GM12878 (cell line): ENCODE measurements at regions of chr6 and their contacts with region 1.

Region 1: GRCh38 chr6:36678518-36679027 is at the start of gene CDKN1A:
- DNase-seq: no peak
- ATAC-seq: peak; percentile 75
- H3K4me3 ChIP-seq: peak within 1 kb of the TSS; percentile 75
- H3K27ac ChIP-seq: peak within 1 kb of the TSS; percentile 88
- H3K4me1 ChIP-seq: peaks cover 44% of the 10 kb centered on the region
- H3K27me3 ChIP-seq: no peaks in the 10 kb centered on the region
- CTCF ChIP-seq: no peak
- EP300 ChIP-seq: 0 out of 4 replicates have a peak, but pooled peaks of 1 of the 2 experiments have one; percentile 38
- POLR2A ChIP-seq: peak; percentile 95
- RAD21 ChIP-seq: no peak
- polyA plus RNA-seq, gene CDKN1A: 25.2 to 48.4 TPM

Region 2: GRCh38 chr6:36442671-36443470 is 235.7 kb before region 1 on chr6 and contains the starts of genes KCTD20 and PXT1:
- CTCF ChIA-PET with region 1: no interaction called
- POLR2A ChIA-PET with region 1: no interaction called
- RAD21 ChIA-PET with region 1: interaction called, 3 read pairs
- SMC1A ChIA-PET with region 1: no interaction called
- in situ Hi-C with region 1: no loop called
- intact Hi-C with region 1: loop called (anchors 5 kb)
- DNase-seq: peak; percentile 48
- ATAC-seq: peak; percentile 85
- H3K4me3 ChIP-seq: peak within 1 kb of the TSS; percentile 86
- H3K27ac ChIP-seq: peak within 1 kb of the TSS; percentile 95
- H3K4me1 ChIP-seq: peaks cover 7% of the 10 kb centered on the region
- H3K27me3 ChIP-seq: no peaks in the 10 kb centered on the region
- CTCF ChIP-seq: no peak
- EP300 ChIP-seq: peak; percentile 32 to 56; a peak in 1 of 4 replicates
- POLR2A ChIP-seq: peak; percentile 91
- RAD21 ChIP-seq: no peak
- polyA plus RNA-seq, gene KCTD20: 18.1 to 20.1 TPM
- polyA plus RNA-seq, gene PXT1: 0.52 to 0.60 TPM

Region 3: GRCh38 chr6:36615018-36615761 is 63.4 kb before region 1 on chr6:
- CTCF ChIA-PET with region 1: interaction called, 66 read pairs
- POLR2A ChIA-PET with region 1: interaction called, 5 read pairs
- RAD21 ChIA-PET with region 1: interaction called, 6 read pairs
- SMC1A ChIA-PET with region 1: interaction called, 33 read pairs
- in situ Hi-C with region 1: loop called (anchors 5 kb)
- intact Hi-C with region 1: no loop called
- DNase-seq: no peak
- ATAC-seq: peak; percentile 69
- H3K4me3 ChIP-seq: no peak overlapping the region
- H3K27ac ChIP-seq: no peak overlapping the region
- H3K4me1 ChIP-seq: peaks cover 6% of the 10 kb centered on the region
- H3K27me3 ChIP-seq: no peaks in the 10 kb centered on the region
- CTCF ChIP-seq: peak; percentile 74 to 84 (median 80)
- EP300 ChIP-seq: no peak
- POLR2A ChIP-seq: no peak
- RAD21 ChIP-seq: peak; percentile 97

Region 4: DNA sequence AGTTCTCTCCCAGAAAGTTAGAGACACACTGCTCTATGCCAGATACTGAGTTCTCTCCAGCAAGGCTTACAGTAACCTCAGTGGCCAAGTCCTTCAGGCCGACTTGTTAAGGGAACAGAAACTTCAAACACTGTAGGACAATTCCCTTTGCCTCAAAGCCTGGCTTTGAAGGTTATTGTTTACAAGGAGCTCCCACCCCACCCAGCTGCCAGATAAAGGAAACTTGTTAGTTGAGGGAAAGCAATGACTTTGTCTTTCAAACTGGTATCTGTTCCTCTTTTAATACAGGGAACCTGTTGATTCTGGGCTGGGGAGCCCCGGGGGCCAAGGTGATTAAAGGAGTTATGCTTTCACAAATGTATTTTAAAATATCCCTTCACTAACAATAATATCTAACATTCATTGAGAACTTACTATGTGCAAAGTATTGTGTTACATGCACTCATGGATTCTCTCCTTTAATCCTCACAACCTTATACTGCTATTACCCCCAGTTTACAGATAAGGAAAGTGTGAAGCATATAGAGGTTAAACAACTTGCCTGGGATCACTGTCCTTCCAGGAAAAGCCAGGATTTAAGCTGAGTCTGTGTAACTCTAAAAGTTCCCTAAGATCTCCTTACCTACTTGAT is 27.6 kb before region 1 on chr6:
- CTCF ChIA-PET with region 1: interaction called, 8 read pairs
- POLR2A ChIA-PET with region 1: interaction called, 77 read pairs
- RAD21 ChIA-PET with region 1: interaction called, 14 read pairs
- SMC1A ChIA-PET with region 1: interaction called, 240 read pairs
- in situ Hi-C with region 1: no loop called
- intact Hi-C with region 1: no loop called
- DNase-seq: peak; percentile 69
- ATAC-seq: peak; percentile 95
- H3K4me3 ChIP-seq: no peak overlapping the region
- H3K27ac ChIP-seq: peak overlapping the region; percentile 52
- H3K4me1 ChIP-seq: peaks cover 42% of the 10 kb centered on the region
- H3K27me3 ChIP-seq: no peaks in the 10 kb centered on the region
- CTCF ChIP-seq: peak in 1 of 3 experiments; percentile 31; a peak in 1 of 6 replicates
- EP300 ChIP-seq: peak; percentile 59 to 90; a peak in 3 of 4 replicates
- POLR2A ChIP-seq: no peak
- RAD21 ChIP-seq: peak; percentile 34

Region 5: DNA sequence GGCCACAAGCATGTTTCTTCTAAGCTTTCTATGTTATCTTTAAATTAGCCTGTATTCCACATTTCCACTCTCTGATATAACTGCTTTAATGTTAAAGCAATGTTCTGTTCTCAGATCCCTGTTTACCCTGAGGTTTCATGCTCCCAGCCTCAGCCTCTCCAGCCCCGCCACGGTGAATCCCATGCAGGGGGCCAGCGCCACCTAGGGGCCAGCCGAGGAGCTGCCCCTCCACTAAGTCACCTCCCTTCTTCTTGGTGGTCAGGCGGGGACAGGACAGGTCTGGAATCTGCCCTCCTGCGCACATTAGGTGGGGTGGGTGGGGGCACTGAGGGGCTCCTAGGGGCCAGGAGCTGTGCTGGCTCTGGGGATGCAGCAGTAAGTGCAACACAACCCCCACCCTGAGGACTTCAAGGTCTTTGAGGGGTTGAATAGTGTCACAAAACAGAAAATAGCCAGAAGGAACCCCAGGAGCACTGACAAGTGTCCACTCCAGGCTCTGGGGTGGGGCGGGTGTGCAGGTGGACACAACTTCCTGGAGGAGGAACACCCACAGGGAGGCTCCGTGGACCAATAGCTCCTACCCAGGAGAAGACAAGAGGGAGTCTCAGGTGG is 80.7 kb after region 1 on chr6:
- CTCF ChIA-PET with region 1: interaction called, 109 read pairs
- POLR2A ChIA-PET with region 1: interaction called, 57 read pairs
- RAD21 ChIA-PET with region 1: interaction called, 124 read pairs
- SMC1A ChIA-PET with region 1: interaction called, 120 read pairs
- in situ Hi-C with region 1: no loop called
- intact Hi-C with region 1: loop called (anchors 1 kb)
- DNase-seq: no peak
- ATAC-seq: peak; percentile 67
- H3K4me3 ChIP-seq: no peak overlapping the region
- H3K27ac ChIP-seq: no peak overlapping the region
- H3K4me1 ChIP-seq: peaks cover 40% of the 10 kb centered on the region
- H3K27me3 ChIP-seq: no peaks in the 10 kb centered on the region
- CTCF ChIP-seq: peak; percentile 98 to 100 (median 98); a peak in 5 of 6 replicates
- EP300 ChIP-seq: no peak
- POLR2A ChIP-seq: no peak
- RAD21 ChIP-seq: peak; percentile 94

Region 6: GRCh38 chr6:36851149-36851614 is 172.6 kb after region 1 on chr6:
- CTCF ChIA-PET with region 1: no interaction called
- POLR2A ChIA-PET with region 1: no interaction called
- RAD21 ChIA-PET with region 1: no interaction called
- SMC1A ChIA-PET with region 1: no interaction called
- in situ Hi-C with region 1: no loop called
- intact Hi-C with region 1: no loop called
- DNase-seq: no peak
- ATAC-seq: peak; percentile 46; the same call in 2 of the 3 replicates
- H3K4me3 ChIP-seq: no peak overlapping the region
- H3K27ac ChIP-seq: no peak overlapping the region
- H3K4me1 ChIP-seq: no peaks in the 10 kb centered on the region
- H3K27me3 ChIP-seq: no peaks in the 10 kb centered on the region
- CTCF ChIP-seq: peak; percentile 71 to 79 (median 77)
- EP300 ChIP-seq: no peak
- POLR2A ChIP-seq: no peak
- RAD21 ChIP-seq: peak; percentile 70